ENCODE measurements at regions of chr15 and their contacts with region 1.

Region 1: GRCh38 chr15:79028411-79028964 is 62.1 kb downstream of the RASGRF1 start:
- DNase-seq: peak; percentile 23 to 90
- H3K4me3 ChIP-seq: no peak overlapping the region
- H3K27ac ChIP-seq: no peak overlapping the region
- H3K4me1 ChIP-seq: no peaks in the 10 kb centered on the region; a peak in 1 of 7 replicates
- H3K27me3 ChIP-seq: no peaks in the 10 kb centered on the region
- CTCF ChIP-seq: peak; percentile 63 to 95 (median 95)
- EP300 ChIP-seq: no peak
- POLR2A ChIP-seq: no peak
- RAD21 ChIP-seq: peak; percentile 97 to 99

Region 2: GRCh38 chr15:78979456-78980320 is 48.8 kb before region 1 on chr15:
- CTCF ChIA-PET with region 1: interaction called, 16 read pairs
- POLR2A ChIA-PET with region 1: no interaction called
- DNase-seq: peak; percentile 69 to 79
- H3K4me3 ChIP-seq: no peak overlapping the region
- H3K27ac ChIP-seq: no peak overlapping the region
- H3K4me1 ChIP-seq: no peaks in the 10 kb centered on the region; a peak in 2 of 7 replicates
- H3K27me3 ChIP-seq: peaks cover 0 to 13% (median 8%) of the 10 kb centered on the region in 4 experiments; a peak in 3 of 7 replicates
- CTCF ChIP-seq: peak; percentile 75 to 92 (median 82)
- EP300 ChIP-seq: no peak
- POLR2A ChIP-seq: no peak
- RAD21 ChIP-seq: peak; percentile 77 to 87

Region 3: GRCh38 chr15:79015416-79015815 is 13.1 kb before region 1 on chr15:
- CTCF ChIA-PET with region 1: interaction called, 16 read pairs
- POLR2A ChIA-PET with region 1: interaction called, 3 read pairs
- DNase-seq: no peak
- H3K4me3 ChIP-seq: no peak overlapping the region
- H3K27ac ChIP-seq: no peak overlapping the region
- H3K4me1 ChIP-seq: no peaks in the 10 kb centered on the region; a peak in 1 of 7 replicates
- H3K27me3 ChIP-seq: no peaks in the 10 kb centered on the region
- CTCF ChIP-seq: no peak
- EP300 ChIP-seq: no peak
- POLR2A ChIP-seq: no peak
- RAD21 ChIP-seq: no peak

Region 4: DNA sequence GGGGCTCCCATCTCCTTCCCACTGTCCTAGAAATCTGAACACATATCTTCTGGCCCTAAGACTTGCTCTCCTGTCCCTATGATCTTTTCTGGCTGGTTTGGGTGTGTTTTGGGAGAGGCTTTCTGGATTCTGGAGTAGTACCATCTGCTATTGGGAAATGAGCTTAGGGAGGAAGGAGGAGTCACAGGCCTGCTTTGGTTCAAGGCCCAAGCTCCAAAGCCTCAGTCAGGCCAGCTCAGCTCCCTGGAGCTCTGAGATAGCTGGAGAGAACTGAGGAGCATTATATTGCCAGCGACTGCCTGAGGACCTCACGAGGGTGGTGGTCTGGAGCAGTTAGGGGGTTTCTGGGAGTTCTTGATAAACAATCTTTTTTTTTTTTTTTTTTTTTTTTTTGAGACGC is 43.4 kb after region 1 on chr15:
- CTCF ChIA-PET with region 1: interaction called, 17 read pairs
- POLR2A ChIA-PET with region 1: no interaction called
- DNase-seq: no peak
- H3K4me3 ChIP-seq: no peak overlapping the region
- H3K27ac ChIP-seq: no peak overlapping the region
- H3K4me1 ChIP-seq: no peaks in the 10 kb centered on the region
- H3K27me3 ChIP-seq: peaks cover 0 to 2% (median 0%) of the 10 kb centered on the region in 4 experiments; a peak in 3 of 7 replicates
- CTCF ChIP-seq: no peak
- EP300 ChIP-seq: no peak
- POLR2A ChIP-seq: no peak
- RAD21 ChIP-seq: no peak

Region 5: GRCh38 chr15:79101866-79102578 is 73.5 kb after region 1 on chr15:
- CTCF ChIA-PET with region 1: interaction called, 25 read pairs
- POLR2A ChIA-PET with region 1: no interaction called
- DNase-seq: peak in 1 of 2 experiments; percentile 11
- H3K4me3 ChIP-seq: no peak overlapping the region
- H3K27ac ChIP-seq: no peak overlapping the region
- H3K4me1 ChIP-seq: no peaks in the 10 kb centered on the region
- H3K27me3 ChIP-seq: peaks cover 0 to 9% (median 4%) of the 10 kb centered on the region in 4 experiments; a peak in 4 of 7 replicates
- CTCF ChIP-seq: no peak; a peak in 1 of 4 replicates
- EP300 ChIP-seq: no peak
- POLR2A ChIP-seq: no peak
- RAD21 ChIP-seq: peak in 1 of 2 experiments; percentile 27; a peak in 1 of 4 replicates

Region 6: DNA sequence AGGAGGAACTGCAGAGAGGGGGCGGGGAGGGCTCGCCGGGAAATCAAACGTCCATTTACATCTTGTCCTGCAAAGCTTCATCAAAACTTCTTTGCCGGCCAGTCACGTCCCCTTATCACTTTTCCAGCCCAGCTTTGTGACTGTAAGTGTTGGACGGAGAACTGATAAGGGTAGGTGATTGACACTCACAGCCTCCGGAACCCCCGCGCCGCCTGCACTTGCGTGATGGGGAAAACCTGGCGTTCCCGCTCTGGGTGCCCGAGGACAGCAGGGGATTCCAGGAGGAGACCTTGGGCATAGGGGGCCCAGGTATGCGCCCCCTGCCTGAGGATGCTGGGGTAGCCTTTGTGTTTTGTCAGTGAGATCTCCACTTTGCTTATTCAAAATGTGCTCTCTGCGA is 181.2 kb after region 1 on chr15:
- CTCF ChIA-PET with region 1: interaction called, 56 read pairs
- POLR2A ChIA-PET with region 1: no interaction called
- DNase-seq: peak in 1 of 2 experiments; percentile 81
- H3K4me3 ChIP-seq: peak overlapping the region; percentile 21 to 54 (median 38); a peak in 6 of 8 replicates
- H3K27ac ChIP-seq: no peak overlapping the region
- H3K4me1 ChIP-seq: peaks cover 3 to 9% (median 5%) of the 10 kb centered on the region in 4 experiments
- H3K27me3 ChIP-seq: no peaks in the 10 kb centered on the region; a peak in 1 of 7 replicates
- CTCF ChIP-seq: peak; percentile 67 to 78 (median 75)
- EP300 ChIP-seq: no peak
- POLR2A ChIP-seq: no peak
- RAD21 ChIP-seq: peak; percentile 33 to 55; a peak in 3 of 4 replicates

Measured in H1 (cell line).